Left ventricle myocardium superior (tissue), 1 donor: ENCODE measurements at regions of chr11 and their contacts with region 1.

Region 1: GRCh38 chr11:10943968-10944367 is 86.1 kb upstream of the ZBED5 start:
- DNase-seq: no peak
- ATAC-seq: peak; percentile 73

Region 2: DNA sequence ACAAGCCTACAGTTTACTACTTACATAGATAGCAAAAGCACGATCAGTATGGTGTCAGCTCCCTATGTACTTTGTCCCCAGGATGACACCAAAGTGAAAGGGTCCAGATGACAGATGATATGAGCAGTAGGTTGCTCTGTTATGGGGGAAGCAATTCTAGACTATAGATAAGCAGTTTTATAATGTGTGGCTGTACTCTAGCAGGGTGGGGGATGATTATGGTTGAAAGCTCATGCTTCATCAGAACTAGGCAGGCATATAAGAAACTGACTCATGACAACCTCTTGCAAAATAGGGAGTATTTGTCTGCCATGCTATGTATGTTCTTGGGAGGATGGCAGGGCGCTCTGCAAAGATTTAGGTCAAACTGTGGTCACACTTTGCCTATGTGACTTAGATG is 72.1 kb after region 1 on chr11:
- intact Hi-C with region 1: loop called (anchors 5 kb)
- DNase-seq: no peak
- ATAC-seq: no peak